Activated naive CD4-positive, alpha-beta T cell treated with anti-CD3 and anti-CD28 coated beads for 36 hours (primary cell): ENCODE measurements at regions of chr3 and their contacts with region 1.

Region 1: DNA sequence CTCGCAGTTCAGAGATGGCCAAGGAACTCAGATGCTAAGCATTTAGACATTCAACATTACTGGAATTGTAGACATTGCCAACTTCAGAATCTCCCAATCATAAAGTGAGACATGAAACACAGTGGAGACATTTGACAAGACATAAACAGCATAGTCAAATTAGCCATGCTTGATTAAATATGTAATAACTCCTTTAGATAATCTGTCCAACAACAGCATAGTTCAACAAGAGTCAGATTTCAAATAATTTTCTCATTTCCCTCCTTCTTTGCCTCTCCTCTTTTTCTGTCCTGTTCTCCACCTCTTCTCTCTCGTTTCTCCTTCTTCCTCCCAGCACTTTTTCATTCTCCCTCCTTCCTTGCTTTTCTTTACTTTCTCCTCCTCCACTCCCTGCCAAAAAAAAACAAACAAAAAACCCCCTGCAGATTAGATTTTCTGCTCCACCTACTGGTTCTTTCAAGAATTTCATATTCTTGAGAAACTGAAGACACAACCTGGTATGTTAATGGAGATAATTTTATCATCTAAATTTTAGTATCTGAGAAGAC is 20.2 kb downstream of the CPOX start:
- DNase-seq: no peak
- H3K4me3 Mint-ChIP-seq: no peak overlapping the region
- H3K27ac Mint-ChIP-seq: peak overlapping the region; percentile 47
- H3K4me1 Mint-ChIP-seq: peaks cover 19% of the 10 kb centered on the region
- H3K27me3 Mint-ChIP-seq: no peaks in the 10 kb centered on the region

Region 2: GRCh38 chr3:98359993-98360675 is 213.1 kb before region 1 on chr3:
- CTCF ChIA-PET with region 1: no interaction called
- intact Hi-C with region 1: loop called (anchors 1 kb)
- DNase-seq: peak; percentile 16
- H3K4me3 Mint-ChIP-seq: no peak overlapping the region
- H3K27ac Mint-ChIP-seq: no peak overlapping the region
- H3K4me1 Mint-ChIP-seq: no peaks in the 10 kb centered on the region
- H3K27me3 Mint-ChIP-seq: peaks cover 5% of the 10 kb centered on the region